ENCODE measurements at regions of chr13 and their contacts with region 1.

Region 1: DNA sequence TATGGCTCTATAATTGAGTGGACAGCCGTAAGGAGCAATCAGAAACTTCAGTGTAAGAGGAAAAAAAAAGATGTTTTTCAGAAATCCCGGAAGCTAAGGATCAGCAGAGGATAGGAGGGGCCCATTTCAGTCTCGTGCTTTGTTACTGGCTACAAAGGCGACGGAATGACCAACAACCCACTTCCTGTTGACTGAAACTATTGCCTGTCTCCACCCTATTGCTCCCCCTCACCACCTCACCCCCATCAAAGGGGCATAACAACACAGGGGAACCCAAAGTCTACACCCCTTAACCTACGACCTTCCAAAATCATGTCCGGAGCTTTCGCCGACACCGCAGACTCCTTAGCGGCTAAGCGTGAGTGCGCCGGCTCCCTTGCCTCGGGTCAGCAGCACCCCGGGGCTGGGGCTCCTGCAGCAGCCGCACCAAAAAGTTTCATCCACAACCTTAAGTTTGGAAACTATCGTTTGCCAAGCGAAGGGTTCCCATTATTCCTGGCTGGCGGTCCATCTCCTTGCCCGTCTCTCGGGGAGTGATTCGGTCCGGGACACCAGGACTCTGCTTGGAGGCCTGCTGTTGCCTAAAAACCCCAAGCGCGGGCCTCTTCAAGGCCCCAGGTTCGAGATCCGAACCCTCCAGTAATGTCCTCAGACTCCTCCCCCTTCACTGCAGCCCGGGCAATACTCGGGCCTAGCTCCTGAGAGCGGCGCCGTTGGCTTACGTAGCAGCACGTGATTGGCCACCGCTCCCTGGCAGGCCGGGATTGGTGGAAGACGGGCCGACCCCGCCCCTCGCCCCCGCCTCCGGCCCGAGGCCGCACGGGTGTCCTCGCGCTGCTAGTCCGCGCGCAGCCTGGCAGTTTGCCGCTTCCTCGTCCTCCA is at the start of gene TPP2:
- DNase-seq: peak; percentile 96 to 99 (median 98)
- ATAC-seq: peak; percentile 81
- H3K4me3 ChIP-seq: peak within 1 kb of the TSS; percentile 76
- H3K4me3 Mint-ChIP-seq: peak within 1 kb of the TSS; percentile 97
- H3K27ac ChIP-seq: peak within 1 kb of the TSS; percentile 97 to 98
- H3K27ac Mint-ChIP-seq: peak within 1 kb of the TSS; percentile 100
- H3K4me1 ChIP-seq: peaks cover 32% of the 10 kb centered on the region
- H3K4me1 Mint-ChIP-seq: peaks cover 78% of the 10 kb centered on the region
- H3K27me3 ChIP-seq: no peaks in the 10 kb centered on the region
- H3K27me3 Mint-ChIP-seq: no peaks in the 10 kb centered on the region
- CTCF ChIP-seq: no peak
- total RNA-seq, gene TPP2: 146 to 147 TPM

Region 2: GRCh38 chr13:100674848-100675660 is 1921.3 kb before region 1 on chr13:
- CTCF ChIA-PET with region 1: no interaction called
- POLR2A ChIA-PET with region 1: interaction called, 10 read pairs
- intact Hi-C with region 1: loop called in 1 of 2 experiments (anchors 5 kb)
- DNase-seq: peak; percentile 98 to 100 (median 100)
- ATAC-seq: peak; percentile 90
- H3K4me3 ChIP-seq: peak overlapping the region; percentile 94
- H3K4me3 Mint-ChIP-seq: peak overlapping the region; percentile 96
- H3K27ac ChIP-seq: peak overlapping the region; percentile 48 to 50
- H3K27ac Mint-ChIP-seq: peak overlapping the region; percentile 82
- H3K4me1 ChIP-seq: peaks cover 22% of the 10 kb centered on the region
- H3K4me1 Mint-ChIP-seq: peaks cover 36% of the 10 kb centered on the region
- H3K27me3 ChIP-seq: no peaks in the 10 kb centered on the region
- H3K27me3 Mint-ChIP-seq: no peaks in the 10 kb centered on the region
- CTCF ChIP-seq: peak; percentile 27

Region 3: GRCh38 chr13:101626925-101627555 is 969.3 kb before region 1 on chr13:
- CTCF ChIA-PET with region 1: no interaction called
- POLR2A ChIA-PET with region 1: no interaction called
- intact Hi-C with region 1: no loop called
- DNase-seq: peak in 4 of 14 experiments; percentile 14 to 74 (median 40)
- ATAC-seq: peak; percentile 68
- H3K4me3 ChIP-seq: peak overlapping the region; percentile 32
- H3K4me3 Mint-ChIP-seq: peak overlapping the region; percentile 79
- H3K27ac ChIP-seq: peak overlapping the region in 1 of 2 donors; percentile 14
- H3K27ac Mint-ChIP-seq: peak overlapping the region; percentile 50
- H3K4me1 ChIP-seq: peaks cover 4% of the 10 kb centered on the region
- H3K4me1 Mint-ChIP-seq: peaks cover 43% of the 10 kb centered on the region
- H3K27me3 ChIP-seq: no peaks in the 10 kb centered on the region
- H3K27me3 Mint-ChIP-seq: no peaks in the 10 kb centered on the region
- CTCF ChIP-seq: no peak

Region 4: DNA sequence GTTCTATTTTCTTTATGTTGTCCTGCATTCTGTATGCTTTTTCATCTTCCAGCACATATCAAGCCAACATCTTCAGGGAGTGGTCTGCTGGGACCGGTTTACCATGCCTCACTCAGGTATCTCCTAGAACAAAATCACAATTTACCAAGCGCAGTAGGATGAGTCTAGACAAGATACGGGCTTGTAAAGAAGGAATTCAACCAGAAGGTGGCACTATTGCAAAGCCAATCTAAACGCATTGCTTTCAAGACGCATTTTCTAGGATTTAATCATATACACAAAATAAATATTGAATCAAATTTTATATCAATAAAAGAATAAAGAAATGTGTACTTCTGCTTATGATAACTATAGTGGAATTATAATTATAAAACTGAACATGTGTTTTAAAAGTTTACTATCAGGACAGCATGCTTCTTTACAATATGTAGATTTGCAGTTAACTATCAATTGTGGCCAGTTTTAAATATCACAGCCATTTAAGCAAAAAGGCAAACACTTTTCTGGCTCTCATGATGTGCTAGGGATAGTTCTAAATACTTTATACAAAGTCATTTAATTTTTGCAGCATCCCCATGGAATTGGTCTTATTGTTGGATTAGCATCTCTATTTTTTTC is 15.7 kb before region 1 on chr13:
- CTCF ChIA-PET with region 1: interaction called, 5 read pairs
- POLR2A ChIA-PET with region 1: interaction called, 46 read pairs
- intact Hi-C with region 1: no loop called
- DNase-seq: peak in 6 of 14 experiments; percentile 11 to 83 (median 64)
- ATAC-seq: peak; percentile 85
- H3K4me3 ChIP-seq: no peak overlapping the region
- H3K4me3 Mint-ChIP-seq: no peak overlapping the region
- H3K27ac ChIP-seq: no peak overlapping the region
- H3K27ac Mint-ChIP-seq: no peak overlapping the region
- H3K4me1 ChIP-seq: peaks cover 4% of the 10 kb centered on the region
- H3K4me1 Mint-ChIP-seq: peaks cover 8% of the 10 kb centered on the region
- H3K27me3 ChIP-seq: no peaks in the 10 kb centered on the region
- H3K27me3 Mint-ChIP-seq: peaks cover 4% of the 10 kb centered on the region
- CTCF ChIP-seq: peak; percentile 88

Region 5: DNA sequence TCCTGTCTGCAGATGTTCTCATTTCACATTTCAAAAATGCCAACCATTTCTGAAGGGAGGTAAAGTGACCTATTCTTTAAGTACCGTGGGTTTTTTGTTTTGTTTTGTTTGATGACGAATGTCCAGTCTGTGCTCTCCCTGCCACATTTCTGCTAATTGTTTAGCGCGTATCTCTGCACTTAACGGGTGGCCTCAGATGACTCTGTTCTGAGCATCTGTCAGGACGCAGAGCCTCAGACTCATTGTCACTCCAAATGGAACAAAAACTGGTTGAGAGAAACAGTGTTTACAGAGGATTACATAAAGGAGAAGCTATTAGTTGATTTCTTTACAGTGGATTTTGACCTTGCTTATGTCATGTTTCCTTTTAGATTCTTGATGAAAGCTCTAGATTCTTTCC is 24.1 kb after region 1 on chr13:
- CTCF ChIA-PET with region 1: interaction called, 7 read pairs
- POLR2A ChIA-PET with region 1: interaction called, 116 read pairs
- intact Hi-C with region 1: loop called in 1 of 2 experiments (anchors 2 kb)
- DNase-seq: no peak
- ATAC-seq: no peak
- H3K4me3 ChIP-seq: no peak overlapping the region
- H3K4me3 Mint-ChIP-seq: no peak overlapping the region
- H3K27ac ChIP-seq: no peak overlapping the region
- H3K27ac Mint-ChIP-seq: peak overlapping the region; percentile 20
- H3K4me1 ChIP-seq: no peaks in the 10 kb centered on the region
- H3K4me1 Mint-ChIP-seq: peaks cover 4% of the 10 kb centered on the region
- H3K27me3 ChIP-seq: no peaks in the 10 kb centered on the region
- H3K27me3 Mint-ChIP-seq: no peaks in the 10 kb centered on the region
- CTCF ChIP-seq: no peak

Region 6: DNA sequence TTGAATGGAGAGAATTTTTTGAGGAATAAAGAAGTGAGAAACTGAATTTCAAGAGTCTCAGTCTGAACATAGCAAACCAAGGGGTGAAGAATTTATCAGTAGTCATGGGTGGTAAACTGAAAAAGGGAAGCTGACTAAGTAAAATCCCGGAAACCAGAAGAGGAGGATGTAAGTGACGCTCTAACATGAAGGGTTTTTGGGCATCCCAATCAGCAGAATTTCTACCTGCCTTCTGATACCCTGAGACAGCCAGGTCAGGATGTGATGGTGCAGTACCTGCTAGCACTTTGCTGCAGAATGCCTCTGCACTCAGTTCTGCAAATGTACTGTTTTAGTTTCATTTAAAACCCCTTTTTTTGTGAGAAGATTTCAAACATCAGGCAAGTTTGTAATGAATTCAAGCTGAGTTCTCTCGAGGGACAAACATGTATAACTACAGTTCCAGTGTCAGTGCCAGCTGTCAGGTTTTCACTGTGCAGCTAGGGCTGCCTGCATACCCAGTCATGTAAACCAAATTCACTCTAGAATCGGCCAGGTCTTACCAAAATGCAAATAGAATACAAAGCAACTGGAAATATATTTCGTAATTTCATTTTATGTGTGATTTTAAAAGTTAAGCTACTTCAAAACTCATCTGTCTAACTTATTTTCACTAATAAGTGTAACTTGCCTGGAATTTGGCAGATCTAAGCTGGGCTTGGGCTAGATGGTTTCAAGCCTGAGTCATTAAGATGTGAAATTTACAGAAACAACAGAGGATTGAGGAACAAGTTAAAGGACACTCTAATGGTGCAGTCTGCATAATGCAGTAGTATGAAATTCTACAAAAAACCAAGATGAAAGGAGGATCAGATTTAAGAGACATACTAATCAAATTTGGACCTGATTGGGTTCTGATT is 84.7 kb after region 1 on chr13:
- CTCF ChIA-PET with region 1: no interaction called
- POLR2A ChIA-PET with region 1: interaction called, 14 read pairs
- intact Hi-C with region 1: no loop called
- DNase-seq: peak in 4 of 14 experiments; percentile 14 to 50 (median 28)
- ATAC-seq: peak; percentile 82
- H3K4me3 ChIP-seq: no peak overlapping the region
- H3K4me3 Mint-ChIP-seq: no peak overlapping the region
- H3K27ac ChIP-seq: no peak overlapping the region
- H3K27ac Mint-ChIP-seq: peak overlapping the region; percentile 47
- H3K4me1 ChIP-seq: peaks cover 2% of the 10 kb centered on the region
- H3K4me1 Mint-ChIP-seq: peaks cover 20% of the 10 kb centered on the region
- H3K27me3 ChIP-seq: no peaks in the 10 kb centered on the region
- H3K27me3 Mint-ChIP-seq: no peaks in the 10 kb centered on the region
- CTCF ChIP-seq: no peak

Region 7: DNA sequence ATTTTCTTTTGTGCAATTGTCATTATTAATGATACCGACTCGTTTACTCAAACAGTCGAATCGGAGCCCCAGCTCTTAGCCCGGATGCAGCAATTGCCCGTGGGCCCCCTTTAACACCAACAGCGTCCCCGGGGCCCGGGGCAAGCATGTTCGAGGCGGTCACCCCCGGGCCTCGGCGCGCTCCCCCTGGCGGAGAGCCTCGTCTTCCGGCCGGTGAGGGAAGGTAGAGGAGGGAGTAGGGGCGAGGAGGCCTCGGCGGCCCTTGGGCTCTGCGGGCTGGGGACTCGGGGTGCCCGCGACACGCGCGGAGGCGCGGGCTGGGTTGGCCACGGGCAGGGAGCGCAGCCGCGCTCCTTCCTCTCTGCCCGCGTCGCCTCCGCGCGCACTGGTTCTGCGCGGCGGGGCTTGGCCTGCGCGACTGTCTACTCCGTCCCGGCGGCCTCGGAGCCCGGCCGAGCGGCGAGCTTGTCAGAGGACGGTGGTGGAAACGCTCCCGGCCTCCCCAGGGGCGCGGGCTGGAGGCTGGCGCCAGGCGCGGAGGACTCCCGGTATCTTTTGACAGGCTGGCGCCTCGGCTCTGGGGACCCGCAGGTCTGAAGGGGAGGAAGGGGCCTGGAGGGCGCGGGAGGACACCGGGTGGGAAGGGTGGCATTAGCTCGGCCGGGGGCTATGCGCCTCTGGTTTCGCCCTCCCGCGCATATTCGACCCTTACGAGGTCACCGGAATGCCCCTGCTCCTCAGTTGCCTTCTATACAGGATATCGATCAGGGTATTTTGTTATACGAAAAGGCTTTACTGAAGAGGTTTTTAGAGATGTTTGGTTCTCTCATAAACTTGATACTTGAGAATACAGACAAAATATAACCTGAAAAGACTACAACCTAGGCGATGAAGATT is 204.0 kb after region 1 on chr13:
- CTCF ChIA-PET with region 1: no interaction called
- POLR2A ChIA-PET with region 1: interaction called, 16 read pairs
- intact Hi-C with region 1: loop called in 1 of 2 experiments (anchors 5 kb)
- DNase-seq: peak; percentile 58 to 90 (median 75)
- ATAC-seq: peak; percentile 76
- H3K4me3 ChIP-seq: peak overlapping the region; percentile 77
- H3K4me3 Mint-ChIP-seq: peak overlapping the region; percentile 94
- H3K27ac ChIP-seq: no peak overlapping the region
- H3K27ac Mint-ChIP-seq: peak overlapping the region; percentile 66
- H3K4me1 ChIP-seq: peaks cover 31% of the 10 kb centered on the region
- H3K4me1 Mint-ChIP-seq: peaks cover 29% of the 10 kb centered on the region
- H3K27me3 ChIP-seq: peaks cover 6 to 18% of the 10 kb centered on the region in 2 experiments
- H3K27me3 Mint-ChIP-seq: peaks cover 28% of the 10 kb centered on the region
- CTCF ChIP-seq: peak; percentile 69

Region 8: GRCh38 chr13:102999499-102999898 is 403.1 kb after region 1 on chr13:
- CTCF ChIA-PET with region 1: no interaction called
- POLR2A ChIA-PET with region 1: no interaction called
- intact Hi-C with region 1: no loop called
- DNase-seq: no peak
- ATAC-seq: no peak
- H3K4me3 ChIP-seq: no peak overlapping the region
- H3K4me3 Mint-ChIP-seq: no peak overlapping the region
- H3K27ac ChIP-seq: no peak overlapping the region
- H3K27ac Mint-ChIP-seq: no peak overlapping the region
- H3K4me1 ChIP-seq: no peaks in the 10 kb centered on the region
- H3K4me1 Mint-ChIP-seq: no peaks in the 10 kb centered on the region
- H3K27me3 ChIP-seq: no peaks in the 10 kb centered on the region
- H3K27me3 Mint-ChIP-seq: no peaks in the 10 kb centered on the region
- CTCF ChIP-seq: no peak